Caco-2 (cell line): ENCODE measurements at regions of chr5 and their contacts with region 1.

Region 1: DNA sequence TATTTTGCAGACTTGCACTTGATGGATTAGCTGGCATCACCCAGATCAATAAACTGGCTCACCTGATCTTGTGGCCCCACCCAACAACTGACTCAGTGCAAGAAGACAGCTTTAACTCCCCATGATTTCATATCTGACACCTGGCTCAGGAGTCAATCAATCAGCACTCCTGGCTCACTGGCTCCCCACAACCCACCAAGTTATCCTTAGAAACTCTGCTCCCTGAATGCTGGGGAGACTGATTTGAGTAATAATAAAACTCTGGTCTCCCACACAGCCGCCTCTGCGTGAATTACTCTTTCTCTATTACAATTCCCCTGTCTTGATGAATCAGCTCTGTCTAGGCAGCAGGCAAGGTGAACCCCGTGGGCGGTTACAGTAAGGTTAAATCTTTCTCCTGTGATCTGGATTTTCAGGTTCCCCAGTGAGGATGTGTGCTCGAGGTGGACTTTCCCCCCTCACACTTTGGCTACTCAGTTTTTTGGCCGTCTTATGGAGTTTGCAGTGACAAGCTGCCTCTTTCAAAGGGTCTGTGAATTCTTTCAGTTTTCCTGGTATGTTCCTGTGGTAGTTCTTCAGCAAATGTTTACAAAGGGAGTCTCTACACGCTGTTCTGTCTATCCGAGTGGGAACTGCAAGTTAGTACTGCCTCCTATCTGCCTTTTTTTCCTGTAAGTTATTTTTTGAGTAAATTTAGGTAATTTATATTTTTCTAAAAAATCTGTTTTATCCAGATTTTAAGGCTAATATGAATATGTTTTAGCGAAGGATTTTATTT is 500.2 kb upstream of the NUDT12 start:
- DNase-seq: peak; percentile 70 to 71
- H3K4me3 ChIP-seq: no peak overlapping the region
- H3K4me3 Mint-ChIP-seq: peak overlapping the region; percentile 58
- H3K27ac Mint-ChIP-seq: peak overlapping the region; percentile 77
- H3K4me1 ChIP-seq: peaks cover 11% of the 10 kb centered on the region
- H3K4me1 Mint-ChIP-seq: peaks cover 13% of the 10 kb centered on the region
- H3K27me3 ChIP-seq: no peaks in the 10 kb centered on the region
- H3K27me3 Mint-ChIP-seq: peaks cover 4% of the 10 kb centered on the region
- CTCF ChIP-seq: peak in 1 of 2 experiments; percentile 26

Region 2: GRCh38 chr5:103942587-103943186 is 120.1 kb before region 1 on chr5:
- CTCF ChIA-PET with region 1: no interaction called
- POLR2A ChIA-PET with region 1: no interaction called
- intact Hi-C with region 1: loop called (anchors 1 kb)
- DNase-seq: no peak
- H3K4me3 ChIP-seq: no peak overlapping the region
- H3K4me3 Mint-ChIP-seq: no peak overlapping the region
- H3K27ac Mint-ChIP-seq: no peak overlapping the region
- H3K4me1 ChIP-seq: no peaks in the 10 kb centered on the region
- H3K4me1 Mint-ChIP-seq: no peaks in the 10 kb centered on the region
- H3K27me3 ChIP-seq: no peaks in the 10 kb centered on the region
- H3K27me3 Mint-ChIP-seq: no peaks in the 10 kb centered on the region
- CTCF ChIP-seq: peak in 1 of 2 experiments; percentile 35

Region 3: GRCh38 chr5:104353371-104353770 is 290.6 kb after region 1 on chr5:
- CTCF ChIA-PET with region 1: no interaction called
- POLR2A ChIA-PET with region 1: no interaction called
- intact Hi-C with region 1: no loop called
- DNase-seq: no peak
- H3K4me3 ChIP-seq: no peak overlapping the region
- H3K4me3 Mint-ChIP-seq: no peak overlapping the region
- H3K27ac Mint-ChIP-seq: no peak overlapping the region
- H3K4me1 ChIP-seq: peaks cover 8% of the 10 kb centered on the region
- H3K4me1 Mint-ChIP-seq: peaks cover 14% of the 10 kb centered on the region
- H3K27me3 ChIP-seq: no peaks in the 10 kb centered on the region
- H3K27me3 Mint-ChIP-seq: no peaks in the 10 kb centered on the region
- CTCF ChIP-seq: no peak